Natural killer cell (primary cell): ENCODE measurements at regions of chr17 and their contacts with region 1.

Region 1: GRCh38 chr17:51000835-51001638 is 119.6 kb downstream of the SPAG9 start:
- DNase-seq: peak in 1 of 2 donors; percentile 83
- ATAC-seq: peak; percentile 76 to 90 (median 79)
- H3K4me3 ChIP-seq: no peak overlapping the region
- H3K4me3 Mint-ChIP-seq: no peak overlapping the region
- H3K27ac ChIP-seq: no peak overlapping the region
- H3K27ac Mint-ChIP-seq: peak overlapping the region in 1 of 2 donors; percentile 16
- H3K4me1 ChIP-seq: no peaks in the 10 kb centered on the region
- H3K4me1 Mint-ChIP-seq: peaks cover 0 to 6% of the 10 kb centered on the region in 2 donors
- H3K27me3 ChIP-seq: no peaks in the 10 kb centered on the region
- H3K27me3 Mint-ChIP-seq: no peaks in the 10 kb centered on the region
- CTCF ChIP-seq: peak; percentile 65

Region 2: GRCh38 chr17:50976951-50977472 is 24.0 kb before region 1 on chr17:
- intact Hi-C with region 1: no loop called
- DNase-seq: no peak
- ATAC-seq: no peak
- H3K4me3 ChIP-seq: no peak overlapping the region
- H3K4me3 Mint-ChIP-seq: no peak overlapping the region
- H3K27ac ChIP-seq: no peak overlapping the region
- H3K27ac Mint-ChIP-seq: peak overlapping the region; percentile 44 to 48
- H3K4me1 ChIP-seq: no peaks in the 10 kb centered on the region
- H3K4me1 Mint-ChIP-seq: peaks cover 6 to 7% of the 10 kb centered on the region in 2 donors
- H3K27me3 ChIP-seq: no peaks in the 10 kb centered on the region
- H3K27me3 Mint-ChIP-seq: no peaks in the 10 kb centered on the region
- CTCF ChIP-seq: no peak

Region 3: GRCh38 chr17:51056813-51057510 is 55.9 kb after region 1 on chr17:
- intact Hi-C with region 1: loop called (anchors 1 kb)
- DNase-seq: peak in 1 of 2 donors; percentile 65
- ATAC-seq: peak; percentile 58 to 76 (median 65)
- H3K4me3 ChIP-seq: no peak overlapping the region
- H3K4me3 Mint-ChIP-seq: no peak overlapping the region
- H3K27ac ChIP-seq: no peak overlapping the region
- H3K27ac Mint-ChIP-seq: peak overlapping the region; percentile 12 to 48
- H3K4me1 ChIP-seq: no peaks in the 10 kb centered on the region
- H3K4me1 Mint-ChIP-seq: peaks cover 8 to 26% of the 10 kb centered on the region in 2 donors
- H3K27me3 ChIP-seq: no peaks in the 10 kb centered on the region
- H3K27me3 Mint-ChIP-seq: no peaks in the 10 kb centered on the region
- CTCF ChIP-seq: peak; percentile 44

Region 4: DNA sequence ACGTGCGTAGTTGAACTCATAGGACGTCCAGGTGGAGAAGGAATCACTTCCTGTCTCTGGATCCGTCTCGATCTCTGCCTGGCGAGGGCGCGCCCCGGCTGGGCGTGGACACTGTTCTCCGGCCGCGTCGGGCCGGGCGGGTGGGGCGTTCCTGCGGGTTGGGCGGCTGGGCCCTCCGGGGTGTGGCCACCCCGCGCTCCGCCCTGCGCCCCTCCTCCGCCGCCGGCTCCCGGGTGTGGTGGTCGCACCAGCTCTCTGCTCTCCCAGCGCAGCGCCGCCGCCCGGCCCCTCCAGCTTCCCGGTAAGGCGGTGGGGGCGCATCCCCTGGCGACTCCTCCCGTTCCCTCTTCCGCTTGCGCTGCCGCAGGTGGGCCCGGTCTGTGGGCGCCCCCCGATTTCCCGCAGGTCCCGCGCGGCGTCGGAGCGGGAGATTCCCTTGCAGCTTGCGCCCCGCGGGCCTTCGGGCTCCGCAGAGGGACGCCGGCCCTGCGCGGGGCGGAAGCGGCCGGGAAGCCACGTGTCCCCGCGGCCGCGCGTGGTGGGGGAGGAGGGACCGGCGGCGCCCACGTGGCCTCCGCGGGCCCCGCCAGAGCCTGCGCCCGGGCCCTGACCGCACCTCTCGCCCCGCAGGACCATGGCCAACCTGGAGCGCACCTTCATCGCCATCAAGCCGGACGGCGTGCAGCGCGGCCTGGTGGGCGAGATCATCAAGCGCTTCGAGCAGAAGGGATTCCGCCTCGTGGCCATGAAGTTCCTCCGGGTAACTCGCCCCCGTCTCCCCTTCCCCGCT is 165.4 kb after region 1 on chr17 and contains the start of gene NME2:
- intact Hi-C with region 1: loop called (anchors 1 kb)
- DNase-seq: peak; percentile 65 to 80
- ATAC-seq: peak; percentile 81 to 90 (median 89)
- H3K4me3 ChIP-seq: peak within 1 kb of the TSS; percentile 90
- H3K4me3 Mint-ChIP-seq: peak within 1 kb of the TSS; percentile 90
- H3K27ac ChIP-seq: peak within 1 kb of the TSS; percentile 70
- H3K27ac Mint-ChIP-seq: peak within 1 kb of the TSS; percentile 82 to 93
- H3K4me1 ChIP-seq: peaks cover 23% of the 10 kb centered on the region
- H3K4me1 Mint-ChIP-seq: peaks cover 10 to 25% of the 10 kb centered on the region in 2 donors
- H3K27me3 ChIP-seq: no peaks in the 10 kb centered on the region
- H3K27me3 Mint-ChIP-seq: no peaks in the 10 kb centered on the region
- CTCF ChIP-seq: no peak
- total RNA-seq, gene NME2: 100 to 109 (median 101) TPM